Activated naive CD4-positive, alpha-beta T cell treated with anti-CD3 and anti-CD28 coated beads for 36 hours (primary cell): ENCODE measurements at regions of chr20 and their contacts with region 1.

Region 1: DNA sequence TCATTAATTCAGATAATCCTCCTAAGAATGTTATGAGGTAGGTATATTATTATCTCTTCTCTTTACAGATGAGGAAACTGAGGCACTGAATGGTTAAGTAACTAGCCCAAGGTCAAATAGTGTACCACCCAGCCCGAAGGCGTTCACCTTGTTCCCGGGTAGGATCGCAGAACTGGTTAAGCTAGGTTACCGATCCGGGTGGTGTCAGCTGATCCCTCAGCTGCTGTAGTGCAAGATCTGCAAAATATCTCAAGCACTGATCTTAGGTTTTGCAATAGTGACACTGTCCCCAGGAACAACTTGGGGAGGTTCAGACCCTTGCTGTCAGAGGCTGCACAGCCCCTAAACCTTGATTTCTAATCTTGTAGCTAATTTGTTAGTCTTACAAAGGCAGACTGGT is 28.2 kb downstream of the SLC52A3 start:
- DNase-seq: no peak
- H3K4me3 Mint-ChIP-seq: no peak overlapping the region
- H3K27ac Mint-ChIP-seq: no peak overlapping the region
- H3K4me1 Mint-ChIP-seq: no peaks in the 10 kb centered on the region
- H3K27me3 Mint-ChIP-seq: peaks cover 15% of the 10 kb centered on the region

Region 2: DNA sequence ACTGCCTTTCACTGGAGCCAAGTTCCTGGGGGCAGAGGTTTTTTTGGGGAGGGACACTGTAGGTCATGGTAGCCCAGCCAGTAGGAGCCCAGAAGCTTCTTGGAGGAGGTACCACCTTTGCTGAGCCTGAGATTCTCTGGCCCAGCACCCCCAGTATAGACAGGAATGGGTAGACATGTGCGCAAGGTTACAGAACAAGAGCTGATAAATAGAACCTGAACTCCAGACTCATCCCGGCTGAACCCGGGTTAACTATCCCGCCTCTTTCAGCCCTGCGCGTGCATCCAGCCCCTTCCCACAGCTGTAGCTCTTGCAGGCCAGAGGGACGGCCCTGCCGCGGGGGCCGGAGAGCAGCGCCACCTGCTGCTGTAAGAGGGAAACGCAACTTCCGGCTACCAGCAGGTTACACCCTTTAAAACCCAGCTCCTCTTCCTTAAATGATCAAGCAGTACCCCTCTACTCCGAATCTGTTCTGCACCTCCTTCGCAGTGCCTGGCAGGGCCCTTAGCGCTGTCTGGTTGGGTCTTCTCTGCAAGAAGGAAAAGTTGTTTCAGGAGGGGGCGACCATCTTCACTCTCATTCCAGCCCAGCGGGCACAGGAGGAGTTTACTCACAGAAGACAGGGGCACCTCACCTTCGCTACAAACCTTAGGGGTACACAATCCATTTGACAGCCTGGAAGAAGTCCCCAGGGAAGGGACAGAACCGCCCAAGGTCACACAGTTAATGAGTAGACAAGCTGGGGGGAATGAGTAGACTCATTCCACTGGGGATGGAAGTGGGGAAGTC is 94.6 kb before region 1 on chr20:
- CTCF ChIA-PET with region 1: interaction called, 16 read pairs
- intact Hi-C with region 1: no loop called
- DNase-seq: peak; percentile 76
- H3K4me3 Mint-ChIP-seq: no peak overlapping the region
- H3K27ac Mint-ChIP-seq: no peak overlapping the region
- H3K4me1 Mint-ChIP-seq: peaks cover 9% of the 10 kb centered on the region
- H3K27me3 Mint-ChIP-seq: peaks cover 21% of the 10 kb centered on the region

Region 3: GRCh38 chr20:728248-728944 is 11.7 kb before region 1 on chr20:
- CTCF ChIA-PET with region 1: interaction called, 11 read pairs
- intact Hi-C with region 1: no loop called
- DNase-seq: peak; percentile 69
- H3K4me3 Mint-ChIP-seq: no peak overlapping the region
- H3K27ac Mint-ChIP-seq: no peak overlapping the region
- H3K4me1 Mint-ChIP-seq: no peaks in the 10 kb centered on the region
- H3K27me3 Mint-ChIP-seq: peaks cover 40% of the 10 kb centered on the region

Region 4: DNA sequence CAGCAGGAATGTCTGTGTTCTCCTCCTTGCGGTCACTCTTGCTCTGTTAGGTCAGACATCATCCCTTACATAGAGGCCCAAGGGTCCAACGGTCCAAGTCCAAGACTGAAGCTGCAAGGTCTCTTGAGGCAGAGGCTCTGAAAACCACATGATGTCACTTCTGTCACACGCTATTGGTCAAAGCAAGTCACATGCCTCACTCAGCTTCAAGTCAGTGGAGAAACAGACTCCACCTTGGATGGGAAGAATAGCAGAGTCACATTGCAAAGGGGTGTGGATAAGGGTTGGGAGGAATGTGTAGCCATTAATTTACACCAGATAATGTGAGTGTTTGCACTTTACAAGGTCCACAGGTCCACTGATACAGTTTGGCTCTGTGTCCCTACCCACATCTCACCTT is 10.7 kb after region 1 on chr20:
- CTCF ChIA-PET with region 1: interaction called, 14 read pairs
- intact Hi-C with region 1: no loop called
- DNase-seq: no peak
- H3K4me3 Mint-ChIP-seq: no peak overlapping the region
- H3K27ac Mint-ChIP-seq: no peak overlapping the region
- H3K4me1 Mint-ChIP-seq: peaks cover 6% of the 10 kb centered on the region
- H3K27me3 Mint-ChIP-seq: peaks cover 2% of the 10 kb centered on the region